ENCODE measurements at regions of chr1 and their contacts with region 1.

Region 1: GRCh38 chr1:21703318-21703963 is 34.3 kb upstream of the RAP1GAP start:
- DNase-seq: no peak
- ATAC-seq: peak; percentile 68
- H3K4me3 ChIP-seq: no peak overlapping the region
- H3K27ac ChIP-seq: no peak overlapping the region
- H3K4me1 ChIP-seq: no peaks in the 10 kb centered on the region
- H3K27me3 ChIP-seq: no peaks in the 10 kb centered on the region
- CTCF ChIP-seq: peak; percentile 37 to 48 (median 37); a peak in 5 of 6 replicates
- EP300 ChIP-seq: no peak
- POLR2A ChIP-seq: no peak
- RAD21 ChIP-seq: peak; percentile 48

Region 2: GRCh38 chr1:20753589-20753988 is 949.9 kb before region 1 on chr1:
- CTCF ChIA-PET with region 1: no interaction called
- POLR2A ChIA-PET with region 1: no interaction called
- RAD21 ChIA-PET with region 1: no interaction called
- SMC1A ChIA-PET with region 1: no interaction called
- in situ Hi-C with region 1: loop called (anchors 25 kb)
- intact Hi-C with region 1: no loop called
- DNase-seq: no peak
- ATAC-seq: no peak
- H3K4me3 ChIP-seq: no peak overlapping the region
- H3K27ac ChIP-seq: no peak overlapping the region
- H3K4me1 ChIP-seq: no peaks in the 10 kb centered on the region
- H3K27me3 ChIP-seq: no peaks in the 10 kb centered on the region
- CTCF ChIP-seq: no peak
- EP300 ChIP-seq: no peak
- POLR2A ChIP-seq: no peak
- RAD21 ChIP-seq: no peak

Region 3: GRCh38 chr1:21721295-21721985 is 18.0 kb after region 1 on chr1:
- CTCF ChIA-PET with region 1: interaction called, 11 read pairs
- POLR2A ChIA-PET with region 1: interaction called, 3 read pairs
- RAD21 ChIA-PET with region 1: interaction called, 3 read pairs
- SMC1A ChIA-PET with region 1: interaction called, 9 read pairs
- in situ Hi-C with region 1: no loop called
- intact Hi-C with region 1: no loop called
- DNase-seq: no peak
- ATAC-seq: no peak
- H3K4me3 ChIP-seq: no peak overlapping the region
- H3K27ac ChIP-seq: no peak overlapping the region
- H3K4me1 ChIP-seq: no peaks in the 10 kb centered on the region
- H3K27me3 ChIP-seq: no peaks in the 10 kb centered on the region
- CTCF ChIP-seq: no peak
- EP300 ChIP-seq: no peak
- POLR2A ChIP-seq: no peak
- RAD21 ChIP-seq: no peak

Region 4: GRCh38 chr1:21963477-21964217 is 260.2 kb after region 1 on chr1:
- CTCF ChIA-PET with region 1: no interaction called
- POLR2A ChIA-PET with region 1: no interaction called
- RAD21 ChIA-PET with region 1: no interaction called
- SMC1A ChIA-PET with region 1: interaction called, 5 read pairs
- in situ Hi-C with region 1: no loop called
- intact Hi-C with region 1: loop called (anchors 5 kb)
- DNase-seq: peak; percentile 26
- ATAC-seq: peak; percentile 98
- H3K4me3 ChIP-seq: no peak overlapping the region
- H3K27ac ChIP-seq: no peak overlapping the region
- H3K4me1 ChIP-seq: no peaks in the 10 kb centered on the region
- H3K27me3 ChIP-seq: no peaks in the 10 kb centered on the region
- CTCF ChIP-seq: peak; percentile 84 to 89 (median 87)
- EP300 ChIP-seq: no peak
- POLR2A ChIP-seq: no peak
- RAD21 ChIP-seq: peak; percentile 93